Naive thymus-derived CD8-positive, alpha-beta T cell (primary cell): ENCODE measurements at regions of chr22 and their contacts with region 1.

Region 1: GRCh38 chr22:38181453-38182247 is at the start of gene PLA2G6:
- DNase-seq: peak; percentile 86 to 97 (median 92)
- ATAC-seq: peak; percentile 88 to 94
- H3K4me3 Mint-ChIP-seq: peak within 1 kb of the TSS; percentile 85 to 98 (median 94)
- H3K27ac Mint-ChIP-seq: peak within 1 kb of the TSS; percentile 86 to 97 (median 92)
- H3K4me1 Mint-ChIP-seq: peaks cover 26 to 50% (median 41%) of the 10 kb centered on the region in 4 donors
- H3K27me3 Mint-ChIP-seq: no peaks in the 10 kb centered on the region
- polyA plus RNA-seq, gene PLA2G6: 2.6 to 7.2 (median 2.6) TPM

Region 2: GRCh38 chr22:38143036-38143697 is 38.5 kb before region 1 on chr22:
- POLR2A ChIA-PET with region 1: no interaction called
- DNase-seq: peak in 2 of 10 donors; percentile 4 to 16
- ATAC-seq: no peak
- H3K4me3 Mint-ChIP-seq: peak overlapping the region in 2 of 10 donors; percentile 50 to 67
- H3K27ac Mint-ChIP-seq: peak overlapping the region in 6 of 10 donors; percentile 37 to 88 (median 73)
- H3K4me1 Mint-ChIP-seq: peaks cover 9 to 23% (median 19%) of the 10 kb centered on the region in 4 donors
- H3K27me3 Mint-ChIP-seq: no peaks in the 10 kb centered on the region

Region 3: GRCh38 chr22:38201710-38202436 is 20.2 kb after region 1 on chr22 and contains the start of gene MAFF:
- POLR2A ChIA-PET with region 1: interaction called, 24 read pairs
- DNase-seq: peak; percentile 76 to 93 (median 79)
- ATAC-seq: peak; percentile 72 to 75
- H3K4me3 Mint-ChIP-seq: peak within 1 kb of the TSS; percentile 72 to 93 (median 88)
- H3K27ac Mint-ChIP-seq: peak within 1 kb of the TSS; percentile 89 to 99 (median 97)
- H3K4me1 Mint-ChIP-seq: peaks cover 22 to 50% (median 36%) of the 10 kb centered on the region in 4 donors
- H3K27me3 Mint-ChIP-seq: no peaks in the 10 kb centered on the region
- polyA plus RNA-seq, gene MAFF: 2.6 to 3.3 (median 3.0) TPM